ENCODE measurements at regions of chr12 and their contacts with region 1.

Region 1: GRCh38 chr12:93766796-93767523 is 89.8 kb downstream of the CRADD start:
- DNase-seq: no peak
- H3K4me3 ChIP-seq: no peak overlapping the region
- CTCF ChIP-seq: peak; percentile 61

Region 2: GRCh38 chr12:93387780-93388179 is 379.2 kb before region 1 on chr12:
- CTCF ChIA-PET with region 1: no interaction called
- POLR2A ChIA-PET with region 1: no interaction called
- DNase-seq: no peak
- H3K4me3 ChIP-seq: no peak overlapping the region
- CTCF ChIP-seq: no peak

Region 3: DNA sequence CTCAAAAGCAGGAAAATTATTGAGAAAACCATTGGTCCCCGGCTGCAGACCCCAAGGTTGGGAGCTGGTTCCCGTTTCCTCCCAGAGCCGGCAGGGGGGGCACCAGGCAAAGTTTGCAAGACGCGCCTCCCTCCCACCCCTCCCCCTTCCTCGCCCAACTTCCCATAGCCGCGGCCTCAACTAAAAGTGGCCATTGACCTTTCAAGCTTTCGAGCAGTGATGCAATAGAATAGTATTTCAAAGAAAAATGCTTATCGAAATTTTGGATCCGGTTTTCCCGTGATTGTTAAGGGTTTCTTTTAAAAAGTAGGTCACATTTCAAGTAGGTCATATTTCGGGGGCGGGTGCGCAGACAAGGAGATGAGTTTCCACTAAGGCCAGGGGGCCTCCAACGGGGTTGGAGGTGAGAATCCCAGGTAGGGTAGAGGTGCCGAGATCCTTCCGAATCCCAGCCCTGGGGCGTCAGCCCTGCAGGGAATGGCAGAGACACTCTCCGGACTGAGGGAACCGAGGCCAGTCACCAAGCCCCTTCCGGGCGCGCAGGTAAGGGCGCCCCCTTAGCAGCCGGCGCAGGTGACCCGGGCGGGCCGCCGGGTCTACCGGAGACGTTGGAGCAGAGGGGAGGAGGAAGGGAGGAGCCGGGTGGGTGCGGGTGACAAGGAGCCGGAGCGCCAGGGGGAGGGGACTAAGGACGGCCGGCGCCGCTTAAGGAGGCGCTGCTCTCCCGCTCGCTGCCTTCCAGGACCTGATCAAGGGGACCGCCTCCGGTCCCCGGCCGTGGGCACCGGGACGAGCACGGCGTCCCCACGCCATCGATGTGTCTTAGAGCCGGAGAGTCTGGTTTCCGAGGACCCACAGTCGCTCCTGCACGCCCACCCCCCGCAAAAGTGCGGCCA is 197.1 kb before region 1 on chr12:
- CTCF ChIA-PET with region 1: interaction called, 19 read pairs
- POLR2A ChIA-PET with region 1: no interaction called
- DNase-seq: no peak
- H3K4me3 ChIP-seq: peak overlapping the region; percentile 67
- CTCF ChIP-seq: peak; percentile 89

Region 4: GRCh38 chr12:93663006-93663728 is 103.8 kb before region 1 on chr12:
- CTCF ChIA-PET with region 1: no interaction called
- POLR2A ChIA-PET with region 1: no interaction called
- DNase-seq: no peak
- H3K4me3 ChIP-seq: no peak overlapping the region
- CTCF ChIP-seq: no peak

Region 5: GRCh38 chr12:93778306-93778705 is 11.3 kb after region 1 on chr12:
- CTCF ChIA-PET with region 1: interaction called, 18 read pairs
- POLR2A ChIA-PET with region 1: interaction called, 4 read pairs
- DNase-seq: no peak
- H3K4me3 ChIP-seq: no peak overlapping the region
- CTCF ChIP-seq: no peak

Region 6: DNA sequence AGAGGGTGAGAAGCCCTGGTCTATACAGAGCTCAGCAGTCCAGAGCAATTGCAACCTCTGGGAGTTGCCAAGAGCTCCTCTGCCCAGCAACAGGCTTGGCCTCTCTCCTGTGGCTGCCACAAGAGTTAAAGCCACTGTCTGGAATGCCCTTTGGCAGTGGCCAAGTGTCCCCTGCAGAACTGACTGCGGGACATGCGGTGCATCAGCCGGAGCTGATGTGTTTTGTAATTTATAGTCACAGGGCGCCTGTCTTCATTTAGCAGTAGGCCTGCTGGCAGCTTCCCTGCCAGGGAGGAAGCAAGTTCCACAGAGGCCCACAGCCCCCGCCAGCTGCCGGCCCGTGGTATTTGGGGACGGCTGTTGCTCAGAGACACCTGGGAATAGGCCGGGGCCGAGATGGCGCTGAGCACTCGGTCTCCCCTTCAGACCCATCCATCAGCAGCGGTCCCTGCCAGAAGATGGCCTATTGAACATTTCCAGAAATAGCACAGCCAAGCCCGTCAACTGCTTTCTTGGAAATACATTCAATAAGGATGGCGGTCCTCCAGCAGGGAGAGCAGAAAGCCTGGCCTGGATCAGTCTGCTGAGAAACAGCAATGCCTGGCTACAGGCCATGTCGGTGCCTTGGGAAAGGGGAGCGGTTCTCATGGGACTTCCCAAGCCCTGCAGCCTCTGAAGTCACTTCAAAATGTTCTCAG is 127.6 kb after region 1 on chr12:
- CTCF ChIA-PET with region 1: interaction called, 11 read pairs
- POLR2A ChIA-PET with region 1: no interaction called
- DNase-seq: no peak
- H3K4me3 ChIP-seq: no peak overlapping the region
- CTCF ChIP-seq: no peak

Region 7: DNA sequence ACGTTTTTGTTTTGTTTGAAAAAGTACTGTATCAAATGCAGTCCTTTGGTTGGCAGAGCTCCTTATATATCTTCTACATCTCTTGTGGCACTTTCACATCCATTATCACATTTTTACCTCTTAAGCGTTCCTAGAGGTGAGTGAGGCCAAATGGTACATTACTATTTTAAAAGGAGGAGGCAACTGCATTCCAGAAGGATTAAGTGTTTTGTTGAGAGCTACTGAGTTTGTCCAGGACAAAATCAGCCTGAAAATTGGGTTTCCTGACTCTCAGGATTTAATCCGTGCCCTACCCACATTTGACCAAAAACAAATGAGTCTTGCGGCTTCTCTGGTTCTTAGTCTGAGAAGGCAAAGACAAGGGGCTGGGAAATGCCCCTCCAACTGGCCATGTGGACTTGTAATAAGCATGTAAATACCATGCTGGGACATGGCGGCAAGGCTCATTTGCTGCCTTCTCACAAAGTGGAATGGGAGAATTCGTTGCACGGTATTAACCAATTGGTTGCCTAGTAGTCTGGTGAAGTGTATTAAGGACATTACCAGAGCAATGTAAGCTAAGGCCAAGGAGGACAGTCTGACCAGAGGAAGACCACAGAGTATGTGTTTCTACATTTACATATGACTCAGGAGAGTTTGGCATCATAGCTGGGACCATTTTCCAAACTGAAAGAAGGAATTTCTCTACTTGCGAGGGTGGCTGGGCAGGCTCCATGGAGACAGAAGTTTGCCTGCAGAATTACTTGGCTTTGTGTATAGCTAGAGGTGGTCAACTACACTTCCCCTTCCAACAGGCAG is 205.7 kb after region 1 on chr12:
- CTCF ChIA-PET with region 1: interaction called, 12 read pairs
- POLR2A ChIA-PET with region 1: no interaction called
- DNase-seq: peak; percentile 29
- H3K4me3 ChIP-seq: no peak overlapping the region
- CTCF ChIP-seq: no peak

Region 8: DNA sequence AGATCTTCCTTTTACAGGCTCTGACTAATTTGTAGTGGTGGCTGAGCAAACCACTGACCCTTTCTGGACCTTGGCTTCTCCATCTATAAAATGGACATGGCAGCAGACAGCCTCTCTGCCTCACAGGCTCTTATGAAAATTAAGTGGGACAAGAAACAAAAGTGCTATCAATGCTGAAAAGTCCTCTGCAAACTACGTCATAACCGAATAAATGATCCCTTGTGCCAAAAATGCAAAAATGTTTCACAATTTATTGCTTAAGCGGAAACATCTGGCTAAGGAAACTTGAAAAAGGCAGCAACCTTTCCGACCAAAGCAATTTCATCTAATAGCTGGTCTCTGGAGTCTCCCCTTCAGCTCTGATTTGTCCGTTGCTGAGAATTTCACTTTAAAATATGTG is 273.0 kb after region 1 on chr12:
- CTCF ChIA-PET with region 1: no interaction called
- POLR2A ChIA-PET with region 1: no interaction called
- DNase-seq: no peak
- H3K4me3 ChIP-seq: no peak overlapping the region
- CTCF ChIP-seq: no peak

Region 9: GRCh38 chr12:94092516-94093241 is 325.7 kb after region 1 on chr12:
- CTCF ChIA-PET with region 1: interaction called, 11 read pairs
- POLR2A ChIA-PET with region 1: no interaction called
- DNase-seq: no peak
- H3K4me3 ChIP-seq: no peak overlapping the region
- CTCF ChIP-seq: no peak